ENCODE measurements at regions of chr17 and their contacts with region 1.

Region 1: DNA sequence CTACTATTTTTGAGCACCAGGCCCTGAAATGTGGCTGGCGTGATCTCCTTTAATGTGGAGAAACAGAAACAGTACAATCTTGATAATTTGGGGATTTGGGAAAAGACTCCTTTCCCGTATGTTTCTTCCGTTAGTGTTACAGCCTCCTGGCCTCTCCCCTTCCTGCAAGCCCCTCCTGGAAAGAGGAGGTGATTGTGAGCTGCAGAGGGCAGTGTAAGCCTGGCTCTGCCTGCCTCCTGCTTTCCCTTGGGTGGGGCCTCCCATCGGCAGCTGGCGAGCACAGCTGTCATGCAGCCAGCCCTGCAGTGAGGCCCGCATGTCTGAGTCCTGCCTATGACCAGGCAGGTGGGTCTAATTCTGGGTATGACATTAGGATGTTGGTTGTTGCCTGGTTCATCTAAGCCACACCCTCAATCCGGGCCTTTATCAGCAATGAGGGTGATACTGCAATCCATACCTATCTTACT is 48.7 kb upstream of the WSB1 start:
- DNase-seq: peak; percentile 70
- ATAC-seq: peak; percentile 47
- H3K4me3 ChIP-seq: no peak overlapping the region
- H3K27ac ChIP-seq: peak overlapping the region; percentile 59
- H3K4me1 ChIP-seq: peaks cover 69% of the 10 kb centered on the region
- H3K27me3 ChIP-seq: no peaks in the 10 kb centered on the region
- CTCF ChIP-seq: peak; percentile 68

Region 2: GRCh38 chr17:27199948-27200347 is 45.3 kb before region 1 on chr17:
- CTCF ChIA-PET with region 1: no interaction called
- POLR2A ChIA-PET with region 1: no interaction called
- intact Hi-C with region 1: loop called (anchors 1 kb)
- DNase-seq: peak; percentile 20
- ATAC-seq: peak; percentile 48
- H3K4me3 ChIP-seq: no peak overlapping the region
- H3K27ac ChIP-seq: no peak overlapping the region
- H3K4me1 ChIP-seq: peaks cover 9% of the 10 kb centered on the region; the same call in 1 of the 2 replicates
- H3K27me3 ChIP-seq: no peaks in the 10 kb centered on the region
- CTCF ChIP-seq: no peak

Region 3: GRCh38 chr17:27293898-27294688 is 48.8 kb after region 1 on chr17 and contains the start of gene WSB1:
- CTCF ChIA-PET with region 1: interaction called, 3 read pairs
- POLR2A ChIA-PET with region 1: interaction called, 3 read pairs
- intact Hi-C with region 1: loop called (anchors 1 kb)
- DNase-seq: peak; percentile 83
- ATAC-seq: peak; percentile 80
- H3K4me3 ChIP-seq: peak within 1 kb of the TSS; percentile 98
- H3K27ac ChIP-seq: peak within 1 kb of the TSS; percentile 74
- H3K4me1 ChIP-seq: peaks cover 19% of the 10 kb centered on the region
- H3K27me3 ChIP-seq: no peaks in the 10 kb centered on the region
- CTCF ChIP-seq: no peak
- total RNA-seq, gene WSB1: 32.0 and 35.1 TPM in 2 replicates

Region 4: DNA sequence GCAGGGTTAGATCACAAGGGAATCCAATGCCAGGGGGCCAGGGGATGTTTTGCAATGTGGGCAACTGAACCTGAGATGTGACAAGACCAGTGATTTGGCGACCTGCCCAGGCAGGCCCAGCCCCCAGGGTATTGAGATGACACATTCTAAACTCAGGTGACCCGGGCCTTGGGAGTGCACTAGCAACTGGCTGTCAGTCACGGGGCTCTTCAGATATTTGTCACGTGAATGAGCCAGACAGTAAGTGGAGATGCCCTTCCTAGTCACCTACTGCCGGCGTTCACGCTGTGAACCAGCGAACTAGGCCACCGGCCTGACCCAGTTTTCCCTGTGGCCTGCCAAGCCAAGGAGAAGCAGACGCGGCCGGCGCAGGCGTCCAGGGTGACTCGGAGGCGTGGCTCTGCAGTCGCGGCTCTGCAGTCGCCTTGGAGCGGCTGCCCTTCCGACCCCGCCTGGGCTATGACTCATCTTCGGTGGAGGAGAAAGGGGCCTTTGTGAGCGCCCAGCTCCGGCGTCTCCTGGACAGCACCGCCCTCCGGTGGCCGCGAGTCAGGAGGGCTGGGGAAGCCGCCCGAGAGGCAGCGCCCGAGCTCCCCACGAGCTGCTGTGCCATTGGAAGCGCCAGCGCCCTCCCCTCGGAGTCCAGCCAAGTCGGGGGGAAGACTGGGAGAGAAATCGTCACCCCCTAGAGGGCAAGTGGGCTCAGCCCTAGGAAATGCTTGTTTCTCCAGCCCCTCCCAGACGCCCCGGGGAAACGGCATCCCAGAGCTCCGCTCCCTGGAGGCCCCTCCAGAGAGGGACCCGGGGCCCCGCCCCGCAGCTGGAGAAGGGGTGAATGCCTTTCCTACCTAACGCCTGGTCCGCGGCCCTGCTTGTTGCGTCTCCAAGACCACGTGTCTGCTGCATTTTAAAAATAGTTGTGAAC is 87.5 kb after region 1 on chr17:
- CTCF ChIA-PET with region 1: interaction called, 13 read pairs
- POLR2A ChIA-PET with region 1: no interaction called
- intact Hi-C with region 1: loop called (anchors 1 kb)
- DNase-seq: peak; percentile 95
- ATAC-seq: peak; percentile 95
- H3K4me3 ChIP-seq: peak overlapping the region; percentile 74
- H3K27ac ChIP-seq: peak overlapping the region; percentile 83
- H3K4me1 ChIP-seq: peaks cover 16% of the 10 kb centered on the region
- H3K27me3 ChIP-seq: no peaks in the 10 kb centered on the region
- CTCF ChIP-seq: peak; percentile 75

Region 5: DNA sequence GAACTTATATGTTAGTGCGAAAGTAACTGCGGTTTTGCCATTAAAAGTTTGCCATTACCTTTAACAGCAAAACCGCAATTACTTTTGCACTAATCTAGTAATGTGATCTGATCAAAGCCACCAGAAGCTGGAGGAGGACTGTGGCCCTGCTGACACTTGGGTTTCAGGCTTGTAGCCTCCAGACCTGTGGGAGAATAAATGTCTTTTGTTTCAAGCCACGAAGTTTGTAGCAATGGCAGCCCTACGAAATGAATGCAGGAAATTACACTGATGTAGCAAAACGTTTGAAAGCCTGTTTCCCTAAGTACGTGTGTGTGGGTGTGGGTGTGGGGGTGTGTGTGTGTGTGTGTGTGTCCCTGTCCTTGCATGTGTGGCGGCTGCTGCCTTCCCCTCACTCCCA is 115.2 kb after region 1 on chr17:
- CTCF ChIA-PET with region 1: no interaction called
- POLR2A ChIA-PET with region 1: no interaction called
- intact Hi-C with region 1: no loop called
- DNase-seq: no peak
- ATAC-seq: no peak
- H3K4me3 ChIP-seq: no peak overlapping the region
- H3K27ac ChIP-seq: no peak overlapping the region
- H3K4me1 ChIP-seq: no peaks in the 10 kb centered on the region
- H3K27me3 ChIP-seq: no peaks in the 10 kb centered on the region
- CTCF ChIP-seq: no peak

Measured in PC-3 (cell line).